Activated CD4-positive, alpha-beta T cell treated with anti-CD3 and anti-CD28 coated beads for 36 hours (primary cell): ENCODE measurements at regions of chr18 and their contacts with region 1.

Region 1: DNA sequence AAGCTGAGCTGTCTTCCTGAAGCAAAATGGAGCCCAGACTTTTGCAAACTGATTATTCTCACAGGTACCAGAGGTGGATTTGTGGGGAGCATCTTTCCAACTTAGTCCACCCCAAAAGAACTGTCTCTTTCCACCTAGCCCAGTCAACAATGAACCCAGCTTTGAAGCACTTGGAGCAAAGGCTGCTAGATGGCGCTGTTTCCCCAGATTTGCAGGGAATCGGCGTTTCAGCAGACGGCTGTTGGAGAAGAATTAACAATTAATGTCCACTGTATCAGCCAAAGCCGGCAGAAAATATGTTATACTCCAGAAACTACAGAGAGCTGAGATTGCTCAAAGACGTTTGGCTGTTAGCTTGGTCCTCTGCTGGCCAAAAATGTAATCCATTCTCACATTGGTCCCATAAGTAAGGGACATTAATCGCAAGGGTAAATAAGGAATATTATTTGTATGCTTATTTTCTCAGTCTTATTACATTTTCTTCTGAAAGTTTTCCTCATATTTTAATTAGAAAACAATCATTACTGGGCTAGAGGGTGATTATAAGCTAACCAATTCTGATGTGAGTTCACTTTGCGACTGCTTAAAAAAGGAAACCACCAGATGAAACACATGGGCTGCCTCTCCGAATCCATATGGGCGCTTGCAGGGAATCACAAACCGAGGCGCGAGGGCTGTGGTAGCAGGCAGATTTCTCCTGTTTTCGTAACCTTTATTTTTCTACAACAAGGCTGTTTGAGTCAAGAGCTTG is 423.8 kb upstream of the MEX3C start:
- DNase-seq: peak; percentile 65
- ATAC-seq: no peak
- H3K4me3 Mint-ChIP-seq: no peak overlapping the region
- H3K27ac Mint-ChIP-seq: no peak overlapping the region
- H3K4me1 Mint-ChIP-seq: no peaks in the 10 kb centered on the region
- H3K27me3 Mint-ChIP-seq: peaks cover 21% of the 10 kb centered on the region

Region 2: DNA sequence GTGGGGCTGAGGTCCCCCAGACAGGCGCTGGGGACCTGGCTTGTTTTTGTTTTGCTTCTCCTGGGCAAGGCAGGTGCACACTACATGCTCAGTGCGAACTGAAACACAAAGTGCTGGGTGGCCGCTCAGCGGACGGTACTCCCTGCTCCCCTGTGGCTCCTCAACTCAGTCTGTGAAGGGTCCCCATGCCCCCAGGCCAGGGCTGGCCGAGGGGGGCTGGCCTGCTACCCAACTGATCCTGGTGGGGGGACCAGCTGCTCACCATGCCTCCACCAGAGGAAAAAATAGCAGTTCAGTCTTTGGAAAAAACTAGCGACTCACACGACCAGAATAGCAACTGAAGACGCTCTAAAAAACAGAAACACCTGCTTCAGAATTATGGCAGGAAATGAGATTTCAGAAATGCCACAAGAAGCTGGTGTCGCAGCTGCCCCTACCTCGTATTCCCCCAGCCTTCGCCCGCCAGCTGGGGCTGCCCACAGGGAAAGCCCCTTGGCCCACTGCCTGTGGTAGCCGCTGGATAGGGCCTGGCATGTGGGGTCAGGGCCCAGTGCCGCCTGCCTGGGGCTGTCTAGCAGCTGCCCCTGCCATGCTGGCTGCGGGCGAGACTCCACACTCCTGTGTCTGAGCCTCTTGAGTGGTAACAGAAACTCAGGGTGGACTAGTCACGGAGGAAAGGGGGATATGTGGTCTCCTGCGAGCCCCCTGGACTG is 467.5 kb before region 1 on chr18:
- CTCF ChIA-PET with region 1: no interaction called
- POLR2A ChIA-PET with region 1: no interaction called
- intact Hi-C with region 1: no loop called
- DNase-seq: peak; percentile 67
- ATAC-seq: peak; percentile 28
- H3K4me3 Mint-ChIP-seq: peak overlapping the region; percentile 64
- H3K27ac Mint-ChIP-seq: peak overlapping the region; percentile 98
- H3K4me1 Mint-ChIP-seq: peaks cover 52% of the 10 kb centered on the region
- H3K27me3 Mint-ChIP-seq: no peaks in the 10 kb centered on the region

Region 3: GRCh38 chr18:51654488-51655326 is 33.4 kb after region 1 on chr18:
- CTCF ChIA-PET with region 1: no interaction called
- POLR2A ChIA-PET with region 1: no interaction called
- intact Hi-C with region 1: no loop called
- DNase-seq: no peak
- ATAC-seq: no peak
- H3K4me3 Mint-ChIP-seq: no peak overlapping the region
- H3K27ac Mint-ChIP-seq: no peak overlapping the region
- H3K4me1 Mint-ChIP-seq: peaks cover 2% of the 10 kb centered on the region
- H3K27me3 Mint-ChIP-seq: peaks cover 11% of the 10 kb centered on the region

Region 4: GRCh38 chr18:52288403-52289004 is 667.2 kb after region 1 on chr18:
- CTCF ChIA-PET with region 1: interaction called, 3 read pairs
- POLR2A ChIA-PET with region 1: no interaction called
- intact Hi-C with region 1: loop called in 1 of 2 experiments (anchors 2 kb)
- DNase-seq: peak; percentile 58
- ATAC-seq: no peak
- H3K4me3 Mint-ChIP-seq: no peak overlapping the region
- H3K27ac Mint-ChIP-seq: no peak overlapping the region
- H3K4me1 Mint-ChIP-seq: no peaks in the 10 kb centered on the region
- H3K27me3 Mint-ChIP-seq: no peaks in the 10 kb centered on the region